ENCODE measurements at regions of chr1 and their contacts with region 1.

Region 1: GRCh38 chr1:1374929-1375662 is at the start of gene AURKAIP1:
- DNase-seq: peak; percentile 100
- H3K4me3 ChIP-seq: peak within 1 kb of the TSS; percentile 88 to 95 (median 92)
- H3K27ac ChIP-seq: peak within 1 kb of the TSS; percentile 76
- H3K4me1 ChIP-seq: peaks cover 27% of the 10 kb centered on the region
- H3K27me3 ChIP-seq: no peaks in the 10 kb centered on the region
- CTCF ChIP-seq: peak in 1 of 2 donors; percentile 52
- total RNA-seq, gene AURKAIP1: 85.0 to 167 TPM

Region 2: GRCh38 chr1:999725-1000356 is 375.3 kb before region 1 on chr1 and contains the start of gene HES4:
- CTCF ChIA-PET with region 1: no interaction called
- dilution Hi-C with region 1: loop called (anchors 10 kb)
- in situ Hi-C with region 1: no loop called
- intact Hi-C with region 1: no loop called
- DNase-seq: peak; percentile 82
- H3K4me3 ChIP-seq: peak within 1 kb of the TSS; percentile 42 to 54 (median 50)
- H3K27ac ChIP-seq: peak within 1 kb of the TSS; percentile 45
- H3K4me1 ChIP-seq: peaks cover 30% of the 10 kb centered on the region
- H3K27me3 ChIP-seq: peaks cover 17% of the 10 kb centered on the region
- CTCF ChIP-seq: no peak
- total RNA-seq, gene HES4: 6.4 to 24.7 TPM

Region 3: GRCh38 chr1:1217621-1218523 is 157.2 kb before region 1 on chr1:
- CTCF ChIA-PET with region 1: no interaction called
- dilution Hi-C with region 1: loop called (anchors 5 kb)
- in situ Hi-C with region 1: no loop called
- intact Hi-C with region 1: no loop called
- DNase-seq: peak; percentile 81
- H3K4me3 ChIP-seq: no peak overlapping the region
- H3K27ac ChIP-seq: no peak overlapping the region
- H3K4me1 ChIP-seq: peaks cover 9% of the 10 kb centered on the region
- H3K27me3 ChIP-seq: no peaks in the 10 kb centered on the region
- CTCF ChIP-seq: no peak

Region 4: DNA sequence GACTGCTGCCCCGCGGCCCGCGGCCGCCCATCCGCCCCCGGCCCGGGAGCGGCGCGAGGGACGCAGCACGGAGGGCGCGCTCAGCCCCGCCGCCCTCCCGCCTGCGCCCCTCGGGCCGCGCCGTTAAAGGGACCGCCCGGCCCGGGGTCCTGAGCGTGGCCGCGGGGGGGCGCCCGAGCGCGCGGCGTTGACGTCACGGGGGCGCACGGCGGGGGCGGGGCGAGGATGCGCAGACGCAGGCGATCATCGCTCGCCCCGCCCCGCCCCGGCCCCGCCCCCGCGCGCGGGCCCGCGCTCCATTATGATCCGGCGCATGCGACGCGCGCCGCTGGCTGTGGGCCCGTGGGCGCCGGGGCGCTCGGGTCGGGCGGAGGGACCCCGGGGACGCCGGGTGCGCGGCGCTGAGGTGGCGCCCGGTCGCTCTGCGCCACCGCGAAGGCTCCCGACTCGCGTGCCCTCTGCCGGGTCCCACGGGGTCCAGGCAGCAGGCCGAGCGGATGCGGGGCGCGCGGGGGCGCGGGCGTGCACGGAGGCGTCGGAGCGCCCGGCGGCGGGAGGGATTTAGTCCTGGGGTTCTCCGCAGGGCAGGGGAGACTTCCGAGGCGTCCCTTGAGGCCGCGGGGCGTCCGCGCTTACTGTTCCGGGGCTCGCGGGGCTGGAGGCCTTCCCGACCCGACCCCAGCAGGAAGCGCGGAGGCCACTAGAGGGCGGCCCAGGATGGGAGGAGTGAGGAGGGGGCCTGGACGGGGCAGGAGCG is 25.7 kb before region 1 on chr1 and contains the start of gene DVL1:
- CTCF ChIA-PET with region 1: interaction called, 18 read pairs
- dilution Hi-C with region 1: no loop called
- in situ Hi-C with region 1: no loop called
- intact Hi-C with region 1: loop called (anchors 1 kb)
- DNase-seq: peak; percentile 31
- H3K4me3 ChIP-seq: peak within 1 kb of the TSS; percentile 66 to 93 (median 87)
- H3K27ac ChIP-seq: peak within 1 kb of the TSS; percentile 47
- H3K4me1 ChIP-seq: peaks cover 37% of the 10 kb centered on the region
- H3K27me3 ChIP-seq: no peaks in the 10 kb centered on the region
- CTCF ChIP-seq: peak; percentile 17 to 60
- total RNA-seq, gene DVL1: 62.0 to 109 TPM

Region 5: DNA sequence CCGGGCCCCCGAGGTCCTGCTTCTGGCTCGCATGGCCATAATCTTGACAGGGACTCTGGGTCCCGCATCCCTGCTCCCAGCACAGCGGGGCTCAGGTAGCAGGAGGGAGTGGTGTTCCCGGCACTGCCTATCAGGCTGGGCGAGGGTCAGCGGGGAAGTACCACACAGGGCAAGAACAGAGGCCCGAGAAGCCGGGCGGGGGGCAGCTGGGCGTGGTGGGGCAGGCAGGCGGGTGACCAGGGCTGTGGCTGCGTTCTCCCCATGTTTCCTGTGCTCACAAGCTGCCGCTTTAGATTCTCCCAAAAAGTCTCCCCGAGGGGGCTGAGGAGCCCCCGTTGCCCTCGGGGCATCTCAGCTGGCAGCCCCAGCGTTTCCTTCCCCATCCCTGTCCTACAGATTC is 114.8 kb after region 1 on chr1:
- CTCF ChIA-PET with region 1: no interaction called
- dilution Hi-C with region 1: loop called (anchors 10 kb)
- in situ Hi-C with region 1: no loop called
- intact Hi-C with region 1: no loop called
- DNase-seq: no peak
- H3K4me3 ChIP-seq: no peak overlapping the region
- H3K27ac ChIP-seq: no peak overlapping the region
- H3K4me1 ChIP-seq: no peaks in the 10 kb centered on the region
- H3K27me3 ChIP-seq: no peaks in the 10 kb centered on the region
- CTCF ChIP-seq: no peak

Region 6: GRCh38 chr1:1594602-1595260 is 219.6 kb after region 1 on chr1:
- CTCF ChIA-PET with region 1: no interaction called
- dilution Hi-C with region 1: loop called (anchors 5 kb)
- in situ Hi-C with region 1: no loop called
- intact Hi-C with region 1: no loop called
- DNase-seq: peak; percentile 26
- H3K4me3 ChIP-seq: no peak overlapping the region
- H3K27ac ChIP-seq: no peak overlapping the region
- H3K4me1 ChIP-seq: peaks cover 8% of the 10 kb centered on the region
- H3K27me3 ChIP-seq: no peaks in the 10 kb centered on the region
- CTCF ChIP-seq: no peak

Region 7: GRCh38 chr1:2617971-2618470 is 1242.9 kb after region 1 on chr1:
- CTCF ChIA-PET with region 1: no interaction called
- dilution Hi-C with region 1: no loop called
- in situ Hi-C with region 1: no loop called
- intact Hi-C with region 1: no loop called
- DNase-seq: no peak
- H3K4me3 ChIP-seq: no peak overlapping the region
- H3K27ac ChIP-seq: no peak overlapping the region
- H3K4me1 ChIP-seq: no peaks in the 10 kb centered on the region
- H3K27me3 ChIP-seq: peaks cover 4% of the 10 kb centered on the region
- CTCF ChIP-seq: no peak

Measured in mammary epithelial cell (primary cell).